PC-3 (cell line): ENCODE measurements at regions of chr17 and their contacts with region 1.

Region 1: DNA sequence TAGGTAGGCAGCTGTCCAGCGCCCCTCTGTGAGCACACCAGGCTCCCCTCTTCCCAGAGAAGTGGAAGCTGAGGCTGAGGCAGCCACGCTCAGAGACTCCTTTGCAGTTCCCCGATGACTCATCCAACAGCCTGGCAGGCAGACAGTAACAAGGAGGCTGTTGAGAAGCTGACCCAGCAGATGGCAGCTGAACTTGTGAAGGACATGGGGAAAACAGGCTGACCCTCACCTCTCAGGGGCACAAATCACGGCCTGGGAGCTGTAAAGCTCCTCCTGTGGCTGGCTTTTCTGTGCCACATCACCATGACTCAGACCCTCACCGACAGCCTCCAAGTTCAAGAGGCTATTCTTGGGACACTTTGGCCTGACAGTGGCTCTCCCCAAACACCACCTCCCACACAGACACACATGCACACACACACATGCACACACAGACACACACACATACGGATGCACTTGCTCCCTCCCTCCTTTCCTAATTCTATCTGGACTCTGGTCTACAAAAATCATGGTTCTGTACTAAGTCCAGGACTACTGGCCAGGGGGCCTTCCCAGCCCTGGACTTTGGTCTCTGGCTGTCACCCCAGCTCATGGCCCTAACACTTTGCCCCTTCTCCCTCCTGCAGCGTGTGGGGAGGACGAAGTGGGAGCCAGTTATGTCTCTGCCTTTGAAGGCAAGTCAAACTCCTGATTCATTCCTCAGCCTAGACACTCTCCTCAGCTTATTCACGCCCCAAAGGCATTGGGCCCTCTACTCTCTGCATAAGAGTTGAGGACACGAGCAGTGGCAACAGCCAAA is 23.2 kb downstream of the MAP3K14 start:
- DNase-seq: peak; percentile 90
- ATAC-seq: peak; percentile 77
- H3K4me3 ChIP-seq: no peak overlapping the region
- H3K27ac ChIP-seq: peak overlapping the region; percentile 72
- H3K4me1 ChIP-seq: peaks cover 52% of the 10 kb centered on the region
- H3K27me3 ChIP-seq: no peaks in the 10 kb centered on the region
- CTCF ChIP-seq: peak; percentile 49

Region 2: DNA sequence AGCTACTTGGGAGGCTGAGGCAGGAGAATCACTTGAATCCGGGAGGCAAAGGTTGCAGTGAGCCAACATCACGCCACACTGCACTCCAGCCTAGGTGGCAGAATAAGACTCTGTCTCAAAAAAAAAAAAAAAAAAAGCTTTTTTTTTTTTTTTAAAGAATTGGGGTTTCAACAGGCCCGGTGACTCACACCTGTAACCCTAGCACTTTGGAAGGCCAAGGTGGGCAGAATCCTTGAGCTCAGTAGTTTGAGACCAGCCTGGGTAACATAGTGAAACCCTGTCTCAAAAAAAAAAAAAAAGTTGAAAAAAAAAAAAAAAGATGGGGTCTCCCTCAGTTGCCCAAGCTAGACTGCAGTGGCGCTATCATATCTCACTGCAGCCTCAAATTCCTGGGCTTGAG is 138.6 kb before region 1 on chr17:
- CTCF ChIA-PET with region 1: interaction called, 18 read pairs
- POLR2A ChIA-PET with region 1: no interaction called
- intact Hi-C with region 1: no loop called
- DNase-seq: no peak
- ATAC-seq: no peak
- H3K4me3 ChIP-seq: no peak overlapping the region
- H3K27ac ChIP-seq: no peak overlapping the region
- H3K4me1 ChIP-seq: peaks cover 43% of the 10 kb centered on the region
- H3K27me3 ChIP-seq: no peaks in the 10 kb centered on the region
- CTCF ChIP-seq: no peak

Region 3: GRCh38 chr17:45270828-45271418 is 22.7 kb before region 1 on chr17:
- CTCF ChIA-PET with region 1: no interaction called
- POLR2A ChIA-PET with region 1: no interaction called
- intact Hi-C with region 1: no loop called
- DNase-seq: peak; percentile 31
- ATAC-seq: peak; percentile 39; the same call in 1 of the 2 replicates
- H3K4me3 ChIP-seq: no peak overlapping the region
- H3K27ac ChIP-seq: no peak overlapping the region
- H3K4me1 ChIP-seq: peaks cover 6% of the 10 kb centered on the region
- H3K27me3 ChIP-seq: no peaks in the 10 kb centered on the region
- CTCF ChIP-seq: peak; percentile 91

Region 4: GRCh38 chr17:45364531-45365390 is 71.1 kb after region 1 on chr17:
- CTCF ChIA-PET with region 1: no interaction called
- POLR2A ChIA-PET with region 1: interaction called, 20 read pairs
- intact Hi-C with region 1: no loop called
- DNase-seq: no peak
- ATAC-seq: no peak; the same call in 1 of the 2 replicates
- H3K4me3 ChIP-seq: no peak overlapping the region
- H3K27ac ChIP-seq: no peak overlapping the region
- H3K4me1 ChIP-seq: no peaks in the 10 kb centered on the region
- H3K27me3 ChIP-seq: no peaks in the 10 kb centered on the region
- CTCF ChIP-seq: no peak